Ascending aorta (tissue), 2 donors: ENCODE measurements at regions of chr18 and their contacts with region 1.

Region 1: DNA sequence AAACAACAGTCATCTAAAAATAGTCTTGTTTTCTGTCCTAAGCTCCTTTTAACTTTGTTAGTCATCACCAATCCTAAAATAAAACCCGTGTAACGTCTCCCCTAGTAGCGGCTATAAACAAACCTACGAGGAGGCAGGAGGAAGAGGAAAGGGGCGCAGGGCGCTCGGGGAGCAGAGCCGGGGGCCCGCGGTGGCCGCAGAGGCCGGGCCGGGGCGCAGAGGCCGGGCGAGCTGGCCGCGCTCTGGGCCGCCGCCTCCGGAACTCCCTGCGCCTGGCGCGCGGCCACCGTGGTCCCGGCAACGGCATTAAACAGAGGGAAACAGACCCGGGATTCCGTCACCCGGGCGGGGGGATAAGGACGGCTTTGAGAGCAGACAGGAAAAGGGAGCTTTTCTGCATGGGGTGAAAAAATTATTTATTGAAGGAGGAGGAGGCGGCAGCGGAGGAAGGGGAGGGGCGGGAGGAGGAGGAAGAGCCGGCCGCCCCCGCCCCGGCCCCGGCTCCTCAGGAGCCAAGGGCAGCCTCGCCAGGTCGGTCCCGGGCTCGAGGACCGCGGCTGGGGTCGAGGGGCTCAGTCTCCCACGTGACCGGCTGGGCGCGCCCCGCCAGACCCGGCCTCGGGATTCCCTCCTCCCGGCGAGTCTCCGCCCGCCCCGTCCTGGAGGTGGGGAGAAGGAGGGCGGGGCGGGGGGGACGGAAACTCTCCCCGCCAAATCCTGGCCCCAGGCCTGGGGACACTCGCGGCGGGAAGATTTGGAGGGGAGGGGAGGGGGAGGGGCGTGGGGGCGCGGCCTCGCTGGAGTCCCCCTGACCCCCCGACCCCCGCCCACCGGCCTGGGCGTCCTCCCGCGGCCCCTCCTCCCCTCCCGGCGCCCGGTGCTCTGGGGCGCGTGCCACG is 1.8 kb upstream of the NFATC1 start:
- DNase-seq: peak; percentile 63 to 94
- H3K4me3 ChIP-seq: peak overlapping the region; percentile 77 to 92
- H3K27ac ChIP-seq: peak overlapping the region; percentile 98 to 99
- H3K4me1 ChIP-seq: peaks cover 5 to 17% of the 10 kb centered on the region in 2 donors
- H3K27me3 ChIP-seq: no peaks in the 10 kb centered on the region
- CTCF ChIP-seq: no peak

Region 2: DNA sequence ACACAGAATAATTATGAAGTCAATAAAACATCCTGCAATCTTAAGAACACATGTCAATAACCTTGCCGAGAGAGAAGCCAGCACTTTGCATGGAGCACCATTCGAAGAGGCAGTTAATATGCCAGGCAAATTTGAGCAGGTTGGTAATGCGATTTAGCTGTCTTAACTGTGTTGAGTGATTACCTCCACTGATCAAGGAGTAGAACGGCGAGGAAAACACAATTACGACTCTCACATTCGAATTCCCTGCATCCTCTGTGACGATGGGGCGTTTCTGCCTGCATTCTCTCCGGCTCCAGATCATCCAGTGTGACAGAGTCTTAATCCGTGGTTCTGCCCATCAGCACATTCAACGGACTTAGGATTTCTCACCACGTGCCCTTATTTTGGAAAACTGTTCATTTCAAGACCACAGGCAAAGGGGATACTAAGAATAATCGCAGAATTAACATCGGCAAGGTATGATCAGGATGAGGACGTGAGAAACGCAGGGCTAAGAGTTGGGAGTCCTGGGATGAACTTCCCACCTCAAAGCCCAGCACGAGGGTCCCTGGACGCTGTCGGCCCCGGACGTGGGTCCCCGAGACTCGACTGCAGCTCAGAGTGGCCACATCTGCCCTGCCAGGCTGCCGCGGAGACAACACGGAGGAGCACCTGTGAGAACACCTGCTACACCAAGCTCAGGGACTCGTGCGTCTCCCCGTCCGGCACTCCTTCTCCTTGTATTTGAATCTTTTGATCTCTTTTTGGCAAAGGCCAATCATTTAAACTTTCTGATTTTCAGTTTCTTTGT is 913.4 kb before region 1 on chr18:
- intact Hi-C with region 1: no loop called
- DNase-seq: no peak
- H3K4me3 ChIP-seq: no peak overlapping the region
- H3K27ac ChIP-seq: no peak overlapping the region
- H3K4me1 ChIP-seq: no peaks in the 10 kb centered on the region
- H3K27me3 ChIP-seq: no peaks in the 10 kb centered on the region
- CTCF ChIP-seq: no peak

Region 3: GRCh38 chr18:79679111-79679872 is 285.4 kb after region 1 on chr18 and contains the start of gene CTDP1:
- intact Hi-C with region 1: loop called (anchors 1 kb)
- DNase-seq: peak; percentile 96 to 99
- H3K4me3 ChIP-seq: peak within 1 kb of the TSS; percentile 92 to 99
- H3K27ac ChIP-seq: peak within 1 kb of the TSS; percentile 98 to 100
- H3K4me1 ChIP-seq: peaks cover 2 to 18% of the 10 kb centered on the region in 2 donors
- H3K27me3 ChIP-seq: no peaks in the 10 kb centered on the region
- CTCF ChIP-seq: no peak
- total RNA-seq, gene CTDP1: 31.7 TPM

Region 4: GRCh38 chr18:80119111-80119510 is 725.2 kb after region 1 on chr18:
- intact Hi-C with region 1: no loop called
- DNase-seq: no peak
- H3K4me3 ChIP-seq: no peak overlapping the region
- H3K27ac ChIP-seq: no peak overlapping the region
- H3K4me1 ChIP-seq: no peaks in the 10 kb centered on the region
- H3K27me3 ChIP-seq: no peaks in the 10 kb centered on the region
- CTCF ChIP-seq: no peak